ENCODE measurements at regions of chr16 and their contacts with region 1.

Region 1: GRCh38 chr16:72467157-72467759 is 295.3 kb upstream of the PMFBP1 start:
- H3K4me3 ChIP-seq: no peak overlapping the region
- H3K27ac ChIP-seq: no peak overlapping the region
- H3K4me1 ChIP-seq: no peaks in the 10 kb centered on the region
- CTCF ChIP-seq: peak; percentile 35; the same call in 1 of the 2 replicates

Region 2: DNA sequence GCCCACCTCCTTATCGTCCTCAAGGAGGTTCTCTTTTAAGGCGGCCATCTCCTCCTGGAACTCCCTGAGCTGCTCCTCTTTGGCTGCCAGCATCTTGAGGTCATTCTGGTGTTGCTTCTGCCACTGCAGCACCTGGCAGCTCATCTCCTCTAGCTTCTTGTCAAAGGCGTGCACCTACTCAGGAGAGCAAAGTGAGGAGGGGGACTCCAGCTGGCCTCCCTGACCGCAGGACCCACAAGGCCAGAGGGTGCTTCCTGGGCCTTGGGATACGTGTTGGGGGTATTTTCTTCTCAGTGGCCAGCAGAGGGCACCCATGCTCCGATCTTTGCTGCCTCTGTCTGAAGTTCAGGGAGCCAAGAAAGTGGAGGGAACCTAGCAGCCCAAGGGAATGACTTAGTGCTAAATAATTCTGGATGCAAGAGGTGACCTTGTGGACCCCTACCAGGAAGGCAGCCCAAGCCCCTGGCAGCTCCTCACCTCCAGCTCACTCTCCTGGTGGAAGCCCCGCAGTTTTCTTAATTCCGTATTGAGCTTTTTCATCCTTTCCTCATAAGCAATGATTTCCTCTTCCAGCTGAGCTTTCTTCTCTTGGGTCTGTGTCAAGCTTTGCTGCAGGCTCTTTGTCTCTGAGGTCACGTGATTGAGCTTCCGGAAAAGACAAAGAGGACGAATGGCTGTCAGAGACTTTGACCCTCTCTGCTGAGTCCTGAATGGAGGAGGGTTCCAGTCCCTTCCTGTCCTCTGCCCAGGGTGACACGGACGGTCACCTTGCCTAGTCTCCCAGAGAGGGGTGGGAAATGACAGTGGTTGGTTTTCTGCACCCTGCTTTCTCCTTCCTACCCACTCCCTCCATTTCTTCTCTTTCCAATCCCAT is 342.3 kb before region 1 on chr16:
- CTCF ChIA-PET with region 1: interaction called, 20 read pairs
- POLR2A ChIA-PET with region 1: no interaction called
- H3K4me3 ChIP-seq: no peak overlapping the region
- H3K27ac ChIP-seq: no peak overlapping the region
- H3K4me1 ChIP-seq: no peaks in the 10 kb centered on the region
- CTCF ChIP-seq: peak; percentile 81

Region 3: DNA sequence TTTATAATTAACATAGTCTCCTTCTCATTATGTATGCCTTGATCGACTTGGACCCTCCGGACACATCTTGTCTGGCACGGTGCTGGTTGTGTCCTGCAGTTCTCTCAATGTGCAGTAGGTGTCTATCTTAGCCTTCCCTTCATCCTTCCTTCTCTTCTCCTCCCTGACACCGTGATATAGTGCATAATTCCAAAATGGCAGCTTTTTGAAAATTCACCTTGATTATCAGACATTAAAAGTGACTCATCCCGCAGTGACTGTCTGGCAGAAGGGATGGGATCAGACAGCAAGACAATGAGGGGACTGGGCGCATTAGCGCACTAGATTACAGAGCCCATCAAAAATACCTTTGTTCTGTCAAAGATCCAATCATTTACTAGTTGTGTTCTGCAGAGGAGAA is 225.3 kb before region 1 on chr16:
- CTCF ChIA-PET with region 1: interaction called, 20 read pairs
- POLR2A ChIA-PET with region 1: no interaction called
- H3K4me3 ChIP-seq: no peak overlapping the region
- H3K27ac ChIP-seq: no peak overlapping the region
- H3K4me1 ChIP-seq: no peaks in the 10 kb centered on the region
- CTCF ChIP-seq: peak; percentile 51

Region 4: DNA sequence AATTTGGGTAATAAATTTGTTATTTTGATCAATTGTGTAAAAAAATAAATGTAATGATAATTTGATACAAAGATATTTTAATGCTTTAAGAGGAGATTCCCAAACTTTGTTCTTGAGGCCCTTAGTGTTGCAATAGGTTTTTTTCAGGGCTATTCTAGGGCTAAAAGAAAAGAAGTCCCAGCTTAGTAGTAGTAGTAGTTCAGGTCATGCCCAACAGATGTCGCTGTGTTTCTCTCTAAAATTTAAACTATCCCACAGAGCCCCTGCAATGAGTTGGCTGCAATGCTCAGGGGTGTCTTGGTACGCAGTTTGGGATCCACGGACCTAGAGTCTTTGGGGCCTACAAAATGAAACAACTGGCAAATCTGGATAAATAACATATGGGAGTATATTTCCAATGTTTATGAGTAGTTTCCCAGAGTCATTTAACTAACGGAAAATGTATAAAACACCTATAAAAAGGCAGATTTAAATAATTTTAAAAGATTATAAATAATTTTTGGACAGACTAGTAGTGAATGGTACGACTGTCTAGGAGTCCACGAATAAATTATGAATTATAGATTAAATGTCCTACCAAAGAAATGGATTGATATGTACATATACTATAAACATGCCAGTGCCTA is 66.9 kb before region 1 on chr16:
- CTCF ChIA-PET with region 1: interaction called, 13 read pairs
- POLR2A ChIA-PET with region 1: no interaction called
- H3K4me3 ChIP-seq: no peak overlapping the region
- H3K27ac ChIP-seq: no peak overlapping the region
- H3K4me1 ChIP-seq: no peaks in the 10 kb centered on the region
- CTCF ChIP-seq: no peak

Measured in HEK293 (cell line).